Activated T-helper 1 cell treated with anti-CD3 and anti-CD28 coated beads, Interleukin-12 subunit alpha, Interleukin-12 subunit beta, Interleukin-2, Interleukin-4 antibody, amounts not matched to agents 30 ng/mL and 10 ng/mL and 1 ng/mL, durations not matched to agents 14 hours and 24 hours and 36 hours (primary cell): ENCODE measurements at regions of chr1 and their contacts with region 1.

Region 1: GRCh38 chr1:111197598-111198284 is 2.7 kb downstream of the DENND2D start:
- DNase-seq: no peak
- H3K4me3 Mint-ChIP-seq: peak overlapping the region; percentile 100
- H3K27ac Mint-ChIP-seq: peak overlapping the region; percentile 99
- H3K4me1 Mint-ChIP-seq: peaks cover 81% of the 10 kb centered on the region
- H3K27me3 Mint-ChIP-seq: no peaks in the 10 kb centered on the region

Region 2: GRCh38 chr1:111139956-111140679 is 57.6 kb before region 1 on chr1 and contains the starts of genes CEPT1 and DRAM2:
- intact Hi-C with region 1: loop called (anchors 1 kb)
- DNase-seq: peak; percentile 89
- H3K4me3 Mint-ChIP-seq: peak within 1 kb of the TSS; percentile 100
- H3K27ac Mint-ChIP-seq: peak within 1 kb of the TSS; percentile 100
- H3K4me1 Mint-ChIP-seq: peaks cover 40% of the 10 kb centered on the region
- H3K27me3 Mint-ChIP-seq: no peaks in the 10 kb centered on the region
- total RNA-seq, gene CEPT1: 32.5 and 37.3 TPM in 2 replicates
- total RNA-seq, gene DRAM2: 24.0 and 26.6 TPM in 2 replicates

Region 3: DNA sequence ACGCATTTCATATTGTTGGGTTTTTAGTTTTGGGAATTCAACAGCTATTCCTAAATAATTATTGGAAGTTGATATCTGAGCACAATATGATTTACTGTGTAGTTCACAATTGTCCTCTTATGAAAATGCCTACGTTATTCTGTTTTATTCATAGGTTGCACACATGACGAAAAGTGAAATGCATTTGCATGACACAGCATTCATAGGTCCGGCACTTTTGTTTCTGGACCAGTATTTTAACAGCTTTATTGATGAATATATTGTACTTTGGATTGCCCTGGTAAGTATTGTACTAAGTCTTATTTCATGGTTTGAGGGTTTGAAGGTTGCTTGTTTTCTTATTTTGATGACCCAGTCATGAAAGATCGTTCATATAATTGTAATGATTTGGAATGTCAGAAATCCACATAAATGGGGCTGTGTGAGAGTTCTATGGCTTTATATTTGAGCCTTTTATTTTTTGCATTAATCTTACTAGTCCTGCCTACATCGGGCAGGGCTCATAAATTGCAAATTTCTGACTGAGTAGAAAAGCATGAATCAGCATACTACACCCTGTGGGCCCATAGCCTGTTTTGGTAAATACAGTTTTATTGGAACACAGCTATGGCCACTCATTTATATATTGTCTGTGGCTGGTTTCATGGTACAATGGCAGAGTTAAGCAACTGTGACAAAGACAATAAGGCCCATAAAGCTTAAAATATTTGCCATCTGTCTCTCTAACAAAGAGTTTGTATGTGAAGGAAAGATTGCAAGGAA is 14.3 kb before region 1 on chr1:
- intact Hi-C with region 1: loop called (anchors 1 kb)
- DNase-seq: no peak
- H3K4me3 Mint-ChIP-seq: no peak overlapping the region
- H3K27ac Mint-ChIP-seq: no peak overlapping the region
- H3K4me1 Mint-ChIP-seq: peaks cover 41% of the 10 kb centered on the region
- H3K27me3 Mint-ChIP-seq: no peaks in the 10 kb centered on the region

Region 4: DNA sequence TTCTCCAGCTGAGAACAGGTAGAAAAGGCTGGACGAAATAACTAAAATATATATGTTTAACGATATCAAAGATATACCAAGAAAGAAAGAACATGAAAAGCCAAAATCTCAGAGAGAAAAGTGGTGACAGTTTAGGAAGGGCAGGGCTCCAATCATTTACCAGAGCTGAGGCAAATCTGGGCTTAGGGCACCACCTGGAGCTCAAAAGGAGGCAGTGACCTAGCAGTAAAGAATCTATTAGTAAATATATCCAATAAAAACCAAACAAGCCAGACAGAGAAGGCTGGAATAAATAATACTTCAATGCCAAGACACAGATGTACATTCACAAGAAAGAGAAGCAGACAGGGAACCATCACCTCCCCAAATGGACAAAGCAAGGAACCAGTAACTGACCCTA is 136.4 kb after region 1 on chr1:
- intact Hi-C with region 1: loop called (anchors 1 kb)
- DNase-seq: peak; percentile 32
- H3K4me3 Mint-ChIP-seq: no peak overlapping the region
- H3K27ac Mint-ChIP-seq: no peak overlapping the region
- H3K4me1 Mint-ChIP-seq: peaks cover 5% of the 10 kb centered on the region
- H3K27me3 Mint-ChIP-seq: peaks cover 3% of the 10 kb centered on the region

Region 5: DNA sequence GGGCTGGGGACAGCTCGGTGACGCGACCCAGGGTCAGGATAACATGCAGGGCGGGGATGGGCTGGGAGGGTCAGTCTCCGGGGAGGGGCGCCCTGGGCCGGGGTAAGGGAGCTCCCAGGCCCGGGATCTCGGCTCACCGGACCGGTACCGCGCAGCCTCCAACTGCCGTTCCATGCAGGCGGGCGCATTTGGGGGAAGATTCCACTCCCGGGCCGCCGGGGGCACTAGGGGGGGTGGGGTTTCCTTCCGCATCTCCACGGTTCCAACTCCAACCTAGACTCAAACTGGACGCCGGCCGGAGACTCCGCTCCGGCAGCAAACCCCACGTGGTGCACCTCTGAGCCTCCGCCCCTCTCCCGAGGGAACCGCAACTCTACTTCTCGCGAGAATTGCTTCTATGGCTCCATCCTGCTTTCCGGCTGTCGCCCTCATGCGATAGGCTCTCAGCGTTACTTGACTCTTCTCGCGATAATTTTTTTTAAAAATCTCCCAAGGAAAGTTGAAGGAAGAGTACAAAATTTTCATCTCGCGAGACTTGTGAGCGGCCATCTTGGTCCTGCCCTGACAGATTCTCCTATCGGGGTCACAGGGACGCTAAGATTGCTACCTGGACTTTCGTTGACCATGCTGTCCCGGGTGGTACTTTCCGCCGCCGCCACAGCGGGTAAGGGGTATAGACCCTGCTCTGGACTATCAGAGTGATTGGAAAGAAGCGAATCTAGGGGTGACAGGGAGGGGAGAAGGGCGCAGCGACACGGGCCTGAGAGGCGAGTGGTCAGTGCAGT is 251.4 kb after region 1 on chr1 and contains the starts of genes ATP5PB and WDR77:
- intact Hi-C with region 1: loop called (anchors 1 kb)
- DNase-seq: peak; percentile 91
- H3K4me3 Mint-ChIP-seq: peak within 1 kb of the TSS; percentile 100
- H3K27ac Mint-ChIP-seq: peak within 1 kb of the TSS; percentile 96
- H3K4me1 Mint-ChIP-seq: peaks cover 74% of the 10 kb centered on the region
- H3K27me3 Mint-ChIP-seq: no peaks in the 10 kb centered on the region
- total RNA-seq, gene ATP5PB: 280 and 282 TPM in 2 replicates
- total RNA-seq, gene WDR77: 61.3 and 62.5 TPM in 2 replicates